ENCODE measurements at regions of chr3 and their contacts with region 1.

Region 1: DNA sequence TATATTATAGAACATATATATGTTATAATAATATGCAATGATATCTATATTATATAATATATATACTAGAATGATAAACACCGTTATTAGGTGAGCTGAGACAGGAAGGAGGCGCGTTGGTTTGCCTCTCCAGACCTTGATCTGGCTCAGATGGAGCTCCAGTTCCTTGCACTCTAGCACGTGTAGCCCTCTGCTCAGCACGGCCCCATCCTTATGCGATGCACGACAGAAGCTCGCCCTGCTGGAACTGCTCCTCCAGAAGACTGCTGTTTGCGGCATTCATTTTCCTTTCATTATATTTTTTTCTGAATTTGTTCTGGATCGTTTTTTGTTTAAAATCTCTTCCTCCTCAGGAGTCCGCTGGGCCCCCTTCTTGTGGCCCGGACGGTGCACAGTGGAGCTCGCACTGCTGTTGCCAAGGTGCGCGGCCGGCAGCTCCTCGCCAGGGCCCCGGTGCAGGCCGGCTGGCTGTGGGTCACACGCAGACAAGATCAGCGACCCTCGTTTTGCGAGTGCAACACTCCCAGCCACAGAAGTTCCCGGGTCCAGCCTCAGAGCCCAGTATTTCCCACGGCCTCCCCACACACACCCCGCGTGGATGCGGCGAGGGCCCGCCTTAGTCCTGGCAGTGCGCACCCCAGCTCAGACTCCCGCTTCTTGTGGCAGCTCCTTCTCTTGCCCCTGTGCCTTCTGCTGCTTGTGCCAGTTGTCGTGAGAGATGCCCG is 112.2 kb downstream of the CHL1 start:
- DNase-seq: peak in 1 of 5 donors; percentile 22
- ATAC-seq: no peak
- H3K4me3 ChIP-seq: no peak overlapping the region
- H3K27ac ChIP-seq: no peak overlapping the region
- H3K4me1 ChIP-seq: no peaks in the 10 kb centered on the region
- H3K27me3 ChIP-seq: peaks cover 0 to 9% (median 0%) of the 10 kb centered on the region in 9 donors
- CTCF ChIP-seq: no peak
- POLR2A ChIP-seq: no peak

Region 2: GRCh38 chr3:341998-342397 is 33.2 kb after region 1 on chr3:
- intact Hi-C with region 1: loop called in 1 of 10 experiments (anchors 2 kb)
- DNase-seq: no peak
- ATAC-seq: no peak
- H3K4me3 ChIP-seq: no peak overlapping the region
- H3K27ac ChIP-seq: no peak overlapping the region
- H3K4me1 ChIP-seq: no peaks in the 10 kb centered on the region
- H3K27me3 ChIP-seq: peaks cover 0 to 3% (median 0%) of the 10 kb centered on the region in 9 donors
- CTCF ChIP-seq: no peak
- POLR2A ChIP-seq: no peak

Measured in heart left ventricle (tissue), 16 donors.